Panc1 (cell line): ENCODE measurements at regions of chr16 and their contacts with region 1.

Region 1: GRCh38 chr16:19086322-19087199 is 19.1 kb downstream of the COQ7 start:
- DNase-seq: peak; percentile 89
- ATAC-seq: peak; percentile 98
- H3K4me3 ChIP-seq: peak overlapping the region; percentile 48 to 79
- H3K27ac ChIP-seq: peak overlapping the region; percentile 65
- H3K4me1 ChIP-seq: no peaks in the 10 kb centered on the region; the same call in 1 of the 2 replicates
- H3K27me3 ChIP-seq: no peaks in the 10 kb centered on the region
- CTCF ChIP-seq: peak; percentile 100

Region 2: DNA sequence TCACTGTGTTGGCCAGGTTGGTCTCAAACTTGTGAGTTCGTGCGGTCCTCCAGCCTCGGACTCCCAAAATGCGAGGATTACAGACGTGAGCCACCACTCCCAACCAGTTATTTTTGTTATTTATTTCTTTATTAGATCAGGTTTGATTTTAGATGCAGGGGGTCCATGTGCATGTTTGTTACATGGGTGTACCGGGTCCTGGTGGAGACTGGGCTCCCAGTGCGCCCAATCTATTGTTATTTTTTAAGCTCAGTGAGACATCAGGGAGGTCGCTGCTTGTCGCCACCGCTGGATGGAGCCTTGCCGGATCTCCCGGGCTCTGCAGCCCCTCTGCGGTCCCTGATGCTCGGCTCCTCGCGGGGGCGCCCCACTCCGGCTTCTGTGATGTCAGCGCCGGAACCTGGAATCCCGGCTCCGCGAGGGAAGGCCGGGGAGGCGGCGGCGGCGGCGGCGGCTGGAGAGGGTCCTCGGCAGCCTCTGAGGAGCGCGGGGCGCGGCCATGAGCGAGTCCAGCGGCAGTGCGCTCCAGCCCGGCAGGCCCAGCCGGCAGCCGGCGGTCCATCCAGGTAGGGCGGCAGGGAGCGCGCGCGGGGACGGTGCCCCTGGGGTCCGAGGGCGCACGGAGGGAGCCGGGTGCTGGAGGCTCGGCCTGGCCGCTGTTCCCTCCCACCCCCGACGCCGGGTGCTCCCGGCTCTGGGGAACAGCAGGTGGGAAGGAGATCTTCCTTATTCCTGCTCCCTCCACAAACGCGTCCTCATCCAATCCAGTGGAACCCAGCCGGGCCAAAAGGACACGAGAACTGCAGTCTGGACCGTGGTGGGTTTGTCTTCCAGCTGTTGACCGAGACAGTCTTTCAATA is 102.8 kb before region 1 on chr16 and contains the start of gene TMC7:
- CTCF ChIA-PET with region 1: interaction called, 10 read pairs
- POLR2A ChIA-PET with region 1: interaction called, 3 read pairs
- in situ Hi-C with region 1: no loop called
- intact Hi-C with region 1: no loop called
- DNase-seq: peak; percentile 74
- ATAC-seq: peak; percentile 99
- H3K4me3 ChIP-seq: peak within 1 kb of the TSS; percentile 58 to 98
- H3K27ac ChIP-seq: peak within 1 kb of the TSS; percentile 87
- H3K4me1 ChIP-seq: peaks cover 6% of the 10 kb centered on the region; the same call in 1 of the 2 replicates
- H3K27me3 ChIP-seq: no peaks in the 10 kb centered on the region
- CTCF ChIP-seq: peak; percentile 100
- total RNA-seq, gene TMC7: 5.1 TPM

Region 3: DNA sequence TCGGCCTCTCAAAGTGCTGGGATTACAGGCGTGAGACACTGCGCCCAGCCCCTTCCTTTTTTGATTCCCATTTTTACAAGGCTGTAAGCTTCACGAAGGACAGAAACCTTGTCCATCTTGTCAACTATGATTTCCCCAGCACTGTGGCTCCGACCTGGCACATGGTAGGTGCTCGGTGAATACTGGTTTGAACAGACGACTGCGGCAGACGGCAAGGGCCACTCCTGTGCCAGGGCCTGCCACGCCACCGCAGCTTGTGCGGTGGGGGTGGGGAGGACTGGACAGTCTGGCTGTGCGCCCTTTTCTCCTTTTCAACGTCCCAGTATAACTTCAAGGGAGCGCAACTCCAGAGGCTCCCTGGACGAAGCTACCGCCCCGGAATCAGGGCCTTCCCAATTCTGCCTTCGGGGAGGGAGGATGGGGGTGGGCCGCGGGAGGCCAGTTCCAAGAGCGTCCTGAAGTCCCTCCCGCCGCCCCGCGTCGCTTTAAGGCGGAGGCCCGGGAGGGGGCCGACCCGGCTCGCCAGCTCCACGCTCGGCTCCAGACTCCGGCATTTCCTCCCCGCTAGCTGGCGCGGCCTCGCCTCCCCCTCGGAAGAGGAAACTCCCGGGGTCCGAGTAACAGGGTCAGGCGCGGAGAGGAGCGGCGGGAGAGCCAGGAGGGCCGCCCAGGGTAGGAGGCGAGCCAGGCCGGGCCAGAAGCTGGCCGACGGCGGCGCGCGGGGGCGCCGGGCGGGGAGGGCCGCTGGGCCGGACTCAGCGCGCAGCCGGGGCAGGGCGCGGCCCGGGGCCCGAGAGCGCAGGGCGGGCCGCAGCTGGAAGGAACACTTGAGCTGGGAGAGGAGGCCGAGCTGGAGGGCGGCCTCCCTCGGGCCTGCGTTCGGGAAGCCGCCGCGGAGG is 27.1 kb after region 1 on chr16 and contains the start of gene ITPRIPL2:
- CTCF ChIA-PET with region 1: interaction called, 16 read pairs
- POLR2A ChIA-PET with region 1: no interaction called
- in situ Hi-C with region 1: no loop called
- intact Hi-C with region 1: no loop called
- DNase-seq: peak; percentile 84
- ATAC-seq: peak; percentile 89
- H3K4me3 ChIP-seq: peak within 1 kb of the TSS; percentile 65 to 78
- H3K27ac ChIP-seq: peak within 1 kb of the TSS; percentile 95
- H3K4me1 ChIP-seq: peaks cover 50% of the 10 kb centered on the region
- H3K27me3 ChIP-seq: no peaks in the 10 kb centered on the region
- CTCF ChIP-seq: no peak
- total RNA-seq, gene ITPRIPL2: 83.2 TPM

Region 4: DNA sequence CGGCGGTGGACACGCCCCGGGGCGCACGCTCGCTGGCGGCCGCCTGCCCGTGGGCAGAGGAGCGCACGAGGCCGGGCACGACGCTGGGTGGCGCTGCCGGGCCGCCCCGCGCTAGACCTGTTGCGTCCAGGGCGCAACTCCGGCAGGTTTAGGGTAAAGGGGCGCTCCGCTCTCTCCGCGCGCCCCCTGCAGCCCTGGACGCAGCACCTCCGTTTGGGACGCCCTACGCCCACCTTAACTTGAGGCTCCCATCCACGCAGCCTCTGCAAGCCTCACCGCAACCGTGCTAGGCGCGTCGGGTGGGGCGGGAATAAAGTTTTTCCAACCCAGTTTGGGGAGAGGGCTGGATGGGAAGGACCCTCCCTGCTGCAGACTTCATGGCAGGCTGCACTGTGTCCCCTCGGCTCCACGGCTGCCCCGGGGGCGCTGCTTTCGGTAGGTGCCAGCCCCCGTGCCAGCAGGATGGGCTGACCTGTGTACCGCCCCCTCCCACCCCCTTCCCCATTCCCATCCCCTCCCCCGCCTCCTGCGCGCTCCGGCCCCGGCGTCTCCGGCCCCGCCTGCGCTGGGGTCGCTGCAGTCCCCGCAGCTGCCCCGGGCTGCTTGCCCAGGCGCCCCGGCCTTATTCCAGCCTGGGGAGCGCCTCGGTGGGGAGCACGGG is 81.3 kb after region 1 on chr16 and contains the start of gene SYT17:
- CTCF ChIA-PET with region 1: no interaction called
- POLR2A ChIA-PET with region 1: no interaction called
- in situ Hi-C with region 1: no loop called
- intact Hi-C with region 1: loop called (anchors 5 kb)
- DNase-seq: no peak
- ATAC-seq: peak; percentile 94
- H3K4me3 ChIP-seq: peak within 1 kb of the TSS; percentile 56 to 73
- H3K27ac ChIP-seq: no peak within 1 kb of the TSS
- H3K4me1 ChIP-seq: 0 out of 2 replicates have a peak, but pooled peaks cover 6% of the 10 kb centered on the region
- H3K27me3 ChIP-seq: no peaks in the 10 kb centered on the region; the same call in none of the 2 replicates
- CTCF ChIP-seq: peak; percentile 98
- total RNA-seq, gene SYT17: 5.4 TPM

Region 5: DNA sequence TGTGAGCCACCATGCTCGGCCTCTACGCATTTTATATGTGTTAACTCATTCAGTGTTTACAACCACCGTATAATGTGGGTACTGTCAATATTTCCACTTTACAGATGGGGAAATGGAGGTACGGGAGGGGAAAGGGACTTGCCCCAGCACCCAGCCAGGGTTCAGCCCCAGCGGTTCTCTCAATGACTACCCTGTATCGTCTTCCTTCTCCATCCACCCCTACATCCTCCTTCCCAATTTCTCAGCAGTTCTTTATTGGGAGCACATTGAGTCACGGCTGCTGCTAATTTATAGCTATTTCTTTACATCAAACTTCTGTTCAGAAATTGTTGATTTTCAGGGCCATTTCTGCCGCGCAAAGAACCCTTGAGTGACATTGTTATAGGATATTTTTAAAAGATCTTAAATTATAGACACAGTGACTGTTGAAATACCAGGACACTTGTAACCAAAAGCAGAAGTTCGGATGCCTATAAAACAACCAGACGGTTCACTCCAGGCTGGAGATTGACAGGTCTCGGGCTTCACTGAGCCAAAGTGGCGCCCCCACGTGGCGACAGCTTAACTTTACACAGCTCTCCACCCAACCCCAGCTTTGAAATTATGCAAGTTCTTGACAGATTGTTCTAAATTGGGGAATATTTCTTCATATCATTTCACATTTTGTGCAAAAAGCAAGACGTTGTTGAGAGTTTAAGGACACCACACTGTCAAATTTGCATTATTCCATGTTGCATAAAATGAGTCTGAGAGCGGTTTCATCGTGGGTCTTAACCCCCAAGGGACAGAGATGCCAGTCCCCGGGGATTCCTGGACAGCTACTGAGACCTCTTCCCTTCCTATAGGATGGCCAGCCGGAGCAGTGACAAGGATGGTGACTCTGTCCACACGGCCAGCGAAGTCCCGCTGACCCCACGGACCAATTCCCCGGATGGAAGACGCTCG is 93.3 kb after region 1 on chr16:
- CTCF ChIA-PET with region 1: interaction called, 12 read pairs
- POLR2A ChIA-PET with region 1: interaction called, 7 read pairs
- in situ Hi-C with region 1: no loop called
- intact Hi-C with region 1: loop called (anchors 5 kb)
- DNase-seq: peak; percentile 39
- ATAC-seq: peak; percentile 84
- H3K4me3 ChIP-seq: no peak overlapping the region
- H3K27ac ChIP-seq: no peak overlapping the region
- H3K4me1 ChIP-seq: no peaks in the 10 kb centered on the region
- H3K27me3 ChIP-seq: no peaks in the 10 kb centered on the region
- CTCF ChIP-seq: peak; percentile 94

Region 6: GRCh38 chr16:19316846-19317245 is 230.3 kb after region 1 on chr16:
- CTCF ChIA-PET with region 1: no interaction called
- POLR2A ChIA-PET with region 1: no interaction called
- in situ Hi-C with region 1: no loop called
- intact Hi-C with region 1: no loop called
- DNase-seq: no peak
- ATAC-seq: no peak
- H3K4me3 ChIP-seq: no peak overlapping the region
- H3K27ac ChIP-seq: no peak overlapping the region
- H3K4me1 ChIP-seq: no peaks in the 10 kb centered on the region
- H3K27me3 ChIP-seq: peaks cover 2% of the 10 kb centered on the region; the same call in 1 of the 2 replicates
- CTCF ChIP-seq: no peak

Region 7: DNA sequence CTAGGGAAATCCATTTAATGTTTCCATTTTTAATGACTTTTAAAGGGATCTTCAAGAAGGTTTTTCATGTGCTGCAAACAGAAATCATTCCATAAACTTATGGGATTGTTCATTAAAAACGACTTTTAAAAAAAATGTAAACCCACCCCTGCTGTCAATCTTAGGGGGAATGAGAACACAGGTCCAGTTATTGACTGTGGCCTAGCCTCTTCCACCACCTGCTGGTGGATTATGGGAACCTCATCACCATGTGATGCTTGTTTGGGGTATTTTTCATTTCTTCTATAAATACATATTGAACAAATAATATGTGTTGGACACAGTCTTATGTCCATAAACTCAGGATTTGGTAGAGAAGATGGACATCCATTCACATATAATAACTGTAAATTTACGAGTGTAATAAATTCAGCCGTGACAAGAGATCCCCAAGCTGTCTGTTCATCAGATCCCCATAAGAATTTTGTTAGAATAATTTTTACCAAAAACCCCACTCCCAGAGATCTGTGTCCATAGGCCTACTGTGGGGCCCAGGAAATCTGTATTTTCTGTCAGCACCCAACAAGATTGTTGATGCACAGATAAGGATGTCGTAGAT is 289.1 kb after region 1 on chr16:
- CTCF ChIA-PET with region 1: no interaction called
- POLR2A ChIA-PET with region 1: interaction called, 7 read pairs
- in situ Hi-C with region 1: no loop called
- intact Hi-C with region 1: loop called (anchors 1 kb)
- DNase-seq: peak; percentile 55
- ATAC-seq: peak; percentile 89
- H3K4me3 ChIP-seq: no peak overlapping the region
- H3K27ac ChIP-seq: no peak overlapping the region
- H3K4me1 ChIP-seq: no peaks in the 10 kb centered on the region
- H3K27me3 ChIP-seq: no peaks in the 10 kb centered on the region
- CTCF ChIP-seq: peak; percentile 92

Region 8: DNA sequence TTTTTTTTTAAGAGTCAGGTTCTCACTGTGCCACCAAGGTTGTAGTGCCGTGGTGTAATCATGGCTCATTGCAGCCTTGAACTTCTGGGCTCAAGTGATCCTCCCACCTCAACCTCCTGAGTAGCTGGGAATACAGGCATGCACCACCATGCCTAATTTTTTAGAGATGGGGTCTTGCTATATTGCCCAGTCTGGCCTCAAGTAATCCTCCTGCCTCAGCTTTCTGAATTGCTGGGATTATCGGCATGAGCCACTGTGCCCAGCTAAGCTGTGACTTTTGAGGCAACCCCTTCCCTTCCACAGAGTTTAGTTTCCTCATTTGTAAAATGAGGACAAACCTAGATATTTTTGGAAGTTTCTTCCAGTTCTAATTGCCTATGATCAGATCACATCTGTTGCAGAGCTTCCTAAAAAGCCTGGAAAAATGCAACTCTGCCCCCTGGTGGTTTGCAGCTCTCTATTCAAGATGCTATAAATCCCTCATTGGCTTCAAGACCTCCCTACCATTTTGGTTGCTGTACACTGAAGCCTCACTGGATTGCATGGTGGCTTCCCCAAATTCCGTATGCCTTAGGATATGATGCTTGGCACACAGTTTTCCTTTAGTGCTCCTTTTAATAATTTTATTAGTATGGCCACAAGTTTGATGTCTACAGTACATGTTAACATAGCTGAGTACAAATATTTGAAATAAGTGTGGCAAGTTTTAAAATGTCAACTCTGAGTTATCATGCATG is 416.0 kb after region 1 on chr16:
- CTCF ChIA-PET with region 1: interaction called, 8 read pairs
- POLR2A ChIA-PET with region 1: no interaction called
- in situ Hi-C with region 1: no loop called
- intact Hi-C with region 1: loop called (anchors 10 kb)
- DNase-seq: peak; percentile 70
- ATAC-seq: peak; percentile 89
- H3K4me3 ChIP-seq: no peak overlapping the region
- H3K27ac ChIP-seq: no peak overlapping the region
- H3K4me1 ChIP-seq: no peaks in the 10 kb centered on the region
- H3K27me3 ChIP-seq: no peaks in the 10 kb centered on the region
- CTCF ChIP-seq: peak; percentile 93